Activated CD4-positive, alpha-beta T cell treated with anti-CD3 and anti-CD28 coated beads for 36 hours (primary cell): ENCODE measurements at regions of chr10 and their contacts with region 1.

Region 1: GRCh38 chr10:11236234-11236633 is 218.6 kb downstream of the CELF2 start:
- DNase-seq: peak; percentile 57
- ATAC-seq: peak; percentile 52
- H3K4me3 Mint-ChIP-seq: peak overlapping the region; percentile 55
- H3K27ac Mint-ChIP-seq: peak overlapping the region; percentile 98
- H3K4me1 Mint-ChIP-seq: peaks cover 71% of the 10 kb centered on the region
- H3K27me3 Mint-ChIP-seq: no peaks in the 10 kb centered on the region

Region 2: DNA sequence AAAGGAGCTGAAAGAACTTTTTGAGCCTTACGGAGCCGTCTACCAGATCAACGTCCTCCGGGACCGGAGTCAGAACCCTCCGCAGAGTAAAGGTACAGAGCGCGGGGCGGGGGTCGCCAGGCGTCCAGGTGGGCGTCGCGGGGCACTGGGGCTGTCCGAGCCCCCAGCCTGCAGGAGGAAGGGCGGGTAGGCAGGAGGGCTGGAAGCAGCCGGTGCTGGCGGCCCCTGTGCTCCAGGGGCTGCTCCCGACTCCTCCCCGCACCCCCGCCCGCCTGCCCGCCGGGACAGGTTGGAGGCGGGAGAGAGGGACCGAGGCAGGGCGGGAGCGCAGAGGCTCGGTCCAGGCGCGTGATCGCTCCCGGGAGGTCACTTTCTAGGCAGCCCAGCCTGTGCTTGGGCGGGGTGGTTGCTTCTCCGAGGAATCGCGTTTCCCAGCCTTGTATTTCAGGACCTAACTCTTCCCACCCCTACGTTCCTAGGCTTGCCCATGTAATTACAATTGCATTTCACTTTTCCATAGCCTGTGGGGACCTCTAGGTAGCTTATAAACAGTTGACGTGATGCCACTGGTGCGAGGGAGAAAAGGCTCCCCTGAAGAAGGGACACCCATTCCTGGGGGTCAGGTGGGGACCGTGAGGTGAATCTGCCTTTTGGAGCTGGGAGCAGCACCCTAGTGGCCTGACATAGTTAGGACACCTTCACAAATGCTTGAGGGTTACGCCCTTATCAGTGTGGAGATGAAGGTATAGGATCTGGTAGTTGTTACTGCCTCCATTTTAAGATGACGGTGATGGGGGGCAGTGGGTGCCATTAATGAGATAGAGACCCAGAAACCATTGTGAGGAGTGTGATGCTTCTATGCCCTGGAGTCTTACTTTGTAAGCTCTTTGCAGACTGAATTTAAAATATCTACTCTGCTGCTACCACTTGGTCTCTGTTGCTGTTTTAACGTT is 70.4 kb before region 1 on chr10:
- CTCF ChIA-PET with region 1: interaction called, 11 read pairs
- POLR2A ChIA-PET with region 1: interaction called, 12 read pairs
- intact Hi-C with region 1: loop called in 1 of 2 experiments (anchors 1 kb)
- DNase-seq: peak; percentile 85
- ATAC-seq: peak; percentile 57
- H3K4me3 Mint-ChIP-seq: no peak overlapping the region
- H3K27ac Mint-ChIP-seq: peak overlapping the region; percentile 99
- H3K4me1 Mint-ChIP-seq: peaks cover 33% of the 10 kb centered on the region
- H3K27me3 Mint-ChIP-seq: no peaks in the 10 kb centered on the region

Region 3: GRCh38 chr10:11178606-11179515 is 57.4 kb before region 1 on chr10:
- CTCF ChIA-PET with region 1: interaction called, 17 read pairs
- POLR2A ChIA-PET with region 1: interaction called, 13 read pairs
- intact Hi-C with region 1: loop called (anchors 1 kb)
- DNase-seq: peak; percentile 90
- ATAC-seq: peak; percentile 72
- H3K4me3 Mint-ChIP-seq: no peak overlapping the region
- H3K27ac Mint-ChIP-seq: no peak overlapping the region
- H3K4me1 Mint-ChIP-seq: peaks cover 94% of the 10 kb centered on the region
- H3K27me3 Mint-ChIP-seq: no peaks in the 10 kb centered on the region

Region 4: GRCh38 chr10:11218395-11218794 is 17.8 kb before region 1 on chr10:
- CTCF ChIA-PET with region 1: interaction called, 27 read pairs
- POLR2A ChIA-PET with region 1: interaction called, 26 read pairs
- intact Hi-C with region 1: loop called (anchors 1 to 2 kb)
- DNase-seq: peak; percentile 64
- ATAC-seq: peak; percentile 92
- H3K4me3 Mint-ChIP-seq: peak overlapping the region; percentile 18
- H3K27ac Mint-ChIP-seq: peak overlapping the region; percentile 85
- H3K4me1 Mint-ChIP-seq: peaks cover 94% of the 10 kb centered on the region
- H3K27me3 Mint-ChIP-seq: no peaks in the 10 kb centered on the region

Region 5: DNA sequence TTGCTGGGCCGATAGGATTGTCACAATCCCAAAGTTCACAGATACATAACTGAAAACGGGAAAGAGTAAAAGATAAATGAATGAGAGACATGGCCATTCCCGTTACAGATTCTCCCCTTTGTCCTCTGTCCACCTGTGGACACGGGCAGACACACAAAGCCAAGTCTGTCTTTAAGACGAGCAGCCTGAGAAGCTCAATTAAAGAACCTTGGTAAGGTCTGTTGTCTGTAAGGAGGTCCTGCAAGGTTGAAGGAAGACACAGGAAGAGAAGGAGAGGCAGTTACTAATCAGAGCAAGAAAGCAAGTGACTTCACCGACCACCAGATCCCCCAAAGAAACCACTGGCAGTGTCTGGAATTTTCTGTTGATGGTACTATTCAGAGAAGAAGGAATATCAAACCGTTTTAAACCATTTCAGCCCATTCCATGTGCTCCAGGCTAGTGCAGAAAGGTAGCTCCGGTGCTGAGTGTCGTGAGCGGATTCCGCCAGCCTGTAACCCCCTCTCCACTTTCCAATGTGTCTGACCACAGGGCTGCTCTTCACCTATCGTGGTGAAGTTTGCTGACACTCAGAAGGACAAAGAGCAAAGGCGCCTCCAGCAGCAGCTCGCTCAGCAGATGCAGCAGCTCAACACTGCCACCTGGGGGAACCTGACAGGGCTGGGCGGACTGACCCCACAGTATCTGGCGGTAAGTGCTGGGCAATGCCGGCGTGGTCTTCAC is 34.1 kb after region 1 on chr10:
- CTCF ChIA-PET with region 1: interaction called, 8 read pairs
- POLR2A ChIA-PET with region 1: interaction called, 5 read pairs
- intact Hi-C with region 1: loop called (anchors 2 kb)
- DNase-seq: peak; percentile 88
- ATAC-seq: peak; percentile 60
- H3K4me3 Mint-ChIP-seq: peak overlapping the region; percentile 27
- H3K27ac Mint-ChIP-seq: peak overlapping the region; percentile 81
- H3K4me1 Mint-ChIP-seq: peaks cover 90% of the 10 kb centered on the region
- H3K27me3 Mint-ChIP-seq: no peaks in the 10 kb centered on the region

Region 6: GRCh38 chr10:12121673-12122072 is 885.4 kb after region 1 on chr10:
- CTCF ChIA-PET with region 1: no interaction called
- POLR2A ChIA-PET with region 1: no interaction called
- intact Hi-C with region 1: loop called in 1 of 2 experiments (anchors 5 kb)
- DNase-seq: no peak
- ATAC-seq: no peak
- H3K4me3 Mint-ChIP-seq: peak overlapping the region; percentile 54
- H3K27ac Mint-ChIP-seq: peak overlapping the region; percentile 94
- H3K4me1 Mint-ChIP-seq: peaks cover 32% of the 10 kb centered on the region
- H3K27me3 Mint-ChIP-seq: no peaks in the 10 kb centered on the region